ENCODE measurements at regions of chr13 and their contacts with region 1.

Region 1: GRCh38 chr13:30617315-30618185 is at the start of gene USPL1:
- DNase-seq: peak; percentile 97 to 100 (median 98)
- ATAC-seq: peak; percentile 87
- H3K4me3 ChIP-seq: peak within 1 kb of the TSS; percentile 89
- H3K4me3 Mint-ChIP-seq: no peak within 1 kb of the TSS
- H3K27ac ChIP-seq: peak within 1 kb of the TSS; percentile 95 to 99
- H3K27ac Mint-ChIP-seq: no peak within 1 kb of the TSS
- H3K4me1 ChIP-seq: peaks cover 7% of the 10 kb centered on the region
- H3K4me1 Mint-ChIP-seq: peaks cover 30% of the 10 kb centered on the region
- H3K27me3 ChIP-seq: no peaks in the 10 kb centered on the region
- H3K27me3 Mint-ChIP-seq: no peaks in the 10 kb centered on the region
- CTCF ChIP-seq: no peak
- total RNA-seq, gene USPL1: 41.2 to 42.0 TPM

Region 2: DNA sequence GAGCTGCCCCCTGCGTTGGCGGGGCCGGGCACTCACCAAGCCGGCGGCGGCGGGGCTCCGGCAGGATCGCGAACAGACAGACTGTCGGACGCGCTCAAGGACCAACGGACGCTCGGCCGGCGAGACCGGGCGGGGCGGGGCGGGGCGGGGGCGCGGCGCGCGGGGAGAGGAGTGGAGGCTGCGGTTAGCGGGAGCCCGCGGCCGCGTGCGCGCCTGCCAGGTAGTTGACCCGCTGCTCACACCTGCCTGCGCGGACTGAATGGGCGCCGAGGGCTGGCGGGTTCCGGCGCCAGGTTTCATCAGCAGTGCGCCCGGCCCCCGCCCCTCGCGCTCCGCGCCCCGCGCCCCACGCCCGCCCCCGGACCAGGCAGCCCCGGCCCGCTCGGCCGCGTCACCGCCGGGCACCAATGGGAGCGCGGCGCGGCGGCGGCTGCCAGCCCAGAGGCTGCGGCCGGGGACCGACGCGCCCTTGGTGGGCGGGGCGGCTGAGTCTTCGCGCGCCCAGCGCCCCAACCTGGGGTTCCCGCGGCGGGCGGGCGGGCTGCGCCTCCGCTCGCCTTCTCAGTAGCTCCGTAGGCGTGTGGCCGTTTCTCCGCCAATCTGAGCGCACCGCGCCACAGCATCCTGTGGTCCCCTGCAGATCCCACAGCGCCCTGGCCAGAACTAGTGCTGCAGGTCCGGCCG is 1022.0 kb before region 1 on chr13 and contains the start of gene SLC7A1:
- CTCF ChIA-PET with region 1: no interaction called
- POLR2A ChIA-PET with region 1: interaction called, 4 read pairs
- intact Hi-C with region 1: loop called in 1 of 2 experiments (anchors 10 kb)
- DNase-seq: peak; percentile 54 to 95 (median 74)
- ATAC-seq: peak; percentile 90
- H3K4me3 ChIP-seq: peak within 1 kb of the TSS; percentile 65
- H3K4me3 Mint-ChIP-seq: peak within 1 kb of the TSS; percentile 97
- H3K27ac ChIP-seq: peak within 1 kb of the TSS; percentile 31 to 52
- H3K27ac Mint-ChIP-seq: peak within 1 kb of the TSS; percentile 93
- H3K4me1 ChIP-seq: peaks cover 23% of the 10 kb centered on the region
- H3K4me1 Mint-ChIP-seq: peaks cover 45% of the 10 kb centered on the region
- H3K27me3 ChIP-seq: no peaks in the 10 kb centered on the region
- H3K27me3 Mint-ChIP-seq: no peaks in the 10 kb centered on the region
- CTCF ChIP-seq: no peak
- total RNA-seq, gene SLC7A1: 11.3 to 12.3 TPM

Region 3: DNA sequence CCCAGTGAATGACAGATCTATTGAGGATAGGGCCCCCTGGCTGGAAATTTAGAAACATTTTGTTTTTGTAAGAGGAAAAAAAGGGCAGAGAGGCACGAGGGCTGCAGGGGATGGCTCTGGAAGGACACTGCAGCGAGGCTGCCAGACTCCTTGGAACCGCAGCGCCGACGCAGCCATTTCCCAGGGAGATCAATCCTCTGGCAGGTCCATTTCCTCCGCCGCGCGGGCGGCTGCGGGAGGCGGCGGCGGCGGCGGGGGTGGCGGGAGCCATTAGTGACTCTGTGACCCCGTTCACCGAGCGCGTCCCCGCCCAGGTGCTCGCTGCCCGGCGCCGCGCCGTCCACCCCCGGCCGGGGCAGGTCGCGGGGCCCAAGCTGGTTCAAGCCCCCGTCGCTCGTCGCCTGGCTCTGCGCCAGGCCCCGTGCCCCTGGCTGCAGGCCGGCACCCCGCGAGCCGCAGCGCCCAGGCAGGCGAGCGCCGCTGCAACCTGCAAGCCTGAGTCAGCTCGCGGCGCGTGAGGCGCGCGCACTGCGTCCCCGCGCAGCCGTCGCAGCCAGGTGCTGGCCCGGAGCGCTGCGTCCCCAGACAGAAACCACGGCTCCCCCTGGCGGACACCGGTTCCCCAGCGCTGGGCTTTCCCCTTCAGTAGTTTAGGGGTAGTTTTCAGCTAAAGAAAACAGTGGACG is 502.8 kb before region 1 on chr13:
- CTCF ChIA-PET with region 1: interaction called, 3 read pairs
- POLR2A ChIA-PET with region 1: interaction called, 10 read pairs
- intact Hi-C with region 1: no loop called
- DNase-seq: peak; percentile 85 to 97 (median 95)
- ATAC-seq: peak; percentile 88
- H3K4me3 ChIP-seq: peak overlapping the region; percentile 53
- H3K4me3 Mint-ChIP-seq: peak overlapping the region; percentile 91
- H3K27ac ChIP-seq: no peak overlapping the region
- H3K27ac Mint-ChIP-seq: peak overlapping the region; percentile 78
- H3K4me1 ChIP-seq: peaks cover 29% of the 10 kb centered on the region
- H3K4me1 Mint-ChIP-seq: peaks cover 44% of the 10 kb centered on the region
- H3K27me3 ChIP-seq: no peaks in the 10 kb centered on the region
- H3K27me3 Mint-ChIP-seq: no peaks in the 10 kb centered on the region
- CTCF ChIP-seq: peak; percentile 86

Region 4: GRCh38 chr13:30371649-30372265 is 245.8 kb before region 1 on chr13:
- CTCF ChIA-PET with region 1: interaction called, 6 read pairs
- POLR2A ChIA-PET with region 1: interaction called, 39 read pairs
- intact Hi-C with region 1: loop called in 1 of 2 experiments (anchors 2 kb)
- DNase-seq: peak; percentile 47 to 91 (median 60)
- ATAC-seq: peak; percentile 64
- H3K4me3 ChIP-seq: peak overlapping the region; percentile 30
- H3K4me3 Mint-ChIP-seq: peak overlapping the region; percentile 21
- H3K27ac ChIP-seq: peak overlapping the region; percentile 62 to 74
- H3K27ac Mint-ChIP-seq: peak overlapping the region; percentile 93
- H3K4me1 ChIP-seq: peaks cover 93% of the 10 kb centered on the region
- H3K4me1 Mint-ChIP-seq: peaks cover 82% of the 10 kb centered on the region
- H3K27me3 ChIP-seq: no peaks in the 10 kb centered on the region
- H3K27me3 Mint-ChIP-seq: no peaks in the 10 kb centered on the region
- CTCF ChIP-seq: no peak

Region 5: GRCh38 chr13:30520571-30520970 is 97.0 kb before region 1 on chr13:
- CTCF ChIA-PET with region 1: no interaction called
- POLR2A ChIA-PET with region 1: no interaction called
- intact Hi-C with region 1: no loop called
- DNase-seq: no peak
- ATAC-seq: no peak
- H3K4me3 ChIP-seq: no peak overlapping the region
- H3K4me3 Mint-ChIP-seq: no peak overlapping the region
- H3K27ac ChIP-seq: no peak overlapping the region
- H3K27ac Mint-ChIP-seq: no peak overlapping the region
- H3K4me1 ChIP-seq: no peaks in the 10 kb centered on the region
- H3K4me1 Mint-ChIP-seq: peaks cover 7% of the 10 kb centered on the region
- H3K27me3 ChIP-seq: no peaks in the 10 kb centered on the region
- H3K27me3 Mint-ChIP-seq: no peaks in the 10 kb centered on the region
- CTCF ChIP-seq: no peak

Region 6: GRCh38 chr13:30545320-30545719 is 72.2 kb before region 1 on chr13:
- CTCF ChIA-PET with region 1: no interaction called
- POLR2A ChIA-PET with region 1: no interaction called
- intact Hi-C with region 1: no loop called
- DNase-seq: no peak
- ATAC-seq: no peak
- H3K4me3 ChIP-seq: no peak overlapping the region
- H3K4me3 Mint-ChIP-seq: no peak overlapping the region
- H3K27ac ChIP-seq: no peak overlapping the region
- H3K27ac Mint-ChIP-seq: no peak overlapping the region
- H3K4me1 ChIP-seq: no peaks in the 10 kb centered on the region
- H3K4me1 Mint-ChIP-seq: no peaks in the 10 kb centered on the region
- H3K27me3 ChIP-seq: no peaks in the 10 kb centered on the region
- H3K27me3 Mint-ChIP-seq: no peaks in the 10 kb centered on the region
- CTCF ChIP-seq: no peak

Region 7: GRCh38 chr13:30572859-30573275 is 44.7 kb before region 1 on chr13:
- CTCF ChIA-PET with region 1: interaction called, 3 read pairs
- POLR2A ChIA-PET with region 1: interaction called, 24 read pairs
- intact Hi-C with region 1: loop called (anchors 2 to 5 kb)
- DNase-seq: peak in 5 of 14 experiments; percentile 9 to 67 (median 63)
- ATAC-seq: peak; percentile 55
- H3K4me3 ChIP-seq: peak overlapping the region; percentile 44
- H3K4me3 Mint-ChIP-seq: peak overlapping the region; percentile 82
- H3K27ac ChIP-seq: peak overlapping the region; percentile 16 to 38
- H3K27ac Mint-ChIP-seq: peak overlapping the region; percentile 95
- H3K4me1 ChIP-seq: peaks cover 15% of the 10 kb centered on the region
- H3K4me1 Mint-ChIP-seq: peaks cover 37% of the 10 kb centered on the region
- H3K27me3 ChIP-seq: no peaks in the 10 kb centered on the region
- H3K27me3 Mint-ChIP-seq: no peaks in the 10 kb centered on the region
- CTCF ChIP-seq: peak; percentile 31

Region 8: GRCh38 chr13:30654430-30654829 is 36.9 kb after region 1 on chr13:
- CTCF ChIA-PET with region 1: no interaction called
- POLR2A ChIA-PET with region 1: interaction called, 3 read pairs
- intact Hi-C with region 1: loop called in 1 of 2 experiments (anchors 2 kb)
- DNase-seq: peak in 4 of 14 experiments; percentile 7 to 66 (median 54)
- ATAC-seq: peak; percentile 79
- H3K4me3 ChIP-seq: no peak overlapping the region
- H3K4me3 Mint-ChIP-seq: peak overlapping the region; percentile 36
- H3K27ac ChIP-seq: no peak overlapping the region
- H3K27ac Mint-ChIP-seq: peak overlapping the region; percentile 78
- H3K4me1 ChIP-seq: peaks cover 5% of the 10 kb centered on the region
- H3K4me1 Mint-ChIP-seq: peaks cover 53% of the 10 kb centered on the region
- H3K27me3 ChIP-seq: no peaks in the 10 kb centered on the region
- H3K27me3 Mint-ChIP-seq: no peaks in the 10 kb centered on the region
- CTCF ChIP-seq: no peak

Region 9: GRCh38 chr13:30802953-30803478 is 185.5 kb after region 1 on chr13:
- CTCF ChIA-PET with region 1: interaction called, 3 read pairs
- POLR2A ChIA-PET with region 1: no interaction called
- intact Hi-C with region 1: loop called in 1 of 2 experiments (anchors 5 kb)
- DNase-seq: peak; percentile 60 to 89 (median 74)
- ATAC-seq: peak; percentile 98
- H3K4me3 ChIP-seq: peak overlapping the region; percentile 23
- H3K4me3 Mint-ChIP-seq: peak overlapping the region; percentile 55
- H3K27ac ChIP-seq: no peak overlapping the region
- H3K27ac Mint-ChIP-seq: no peak overlapping the region
- H3K4me1 ChIP-seq: peaks cover 8% of the 10 kb centered on the region
- H3K4me1 Mint-ChIP-seq: peaks cover 7% of the 10 kb centered on the region
- H3K27me3 ChIP-seq: no peaks in the 10 kb centered on the region
- H3K27me3 Mint-ChIP-seq: no peaks in the 10 kb centered on the region
- CTCF ChIP-seq: peak; percentile 94

Measured in CD4-positive, alpha-beta T cell (primary cell).